ENCODE measurements at regions of chr19 and their contacts with region 1.

Region 1: DNA sequence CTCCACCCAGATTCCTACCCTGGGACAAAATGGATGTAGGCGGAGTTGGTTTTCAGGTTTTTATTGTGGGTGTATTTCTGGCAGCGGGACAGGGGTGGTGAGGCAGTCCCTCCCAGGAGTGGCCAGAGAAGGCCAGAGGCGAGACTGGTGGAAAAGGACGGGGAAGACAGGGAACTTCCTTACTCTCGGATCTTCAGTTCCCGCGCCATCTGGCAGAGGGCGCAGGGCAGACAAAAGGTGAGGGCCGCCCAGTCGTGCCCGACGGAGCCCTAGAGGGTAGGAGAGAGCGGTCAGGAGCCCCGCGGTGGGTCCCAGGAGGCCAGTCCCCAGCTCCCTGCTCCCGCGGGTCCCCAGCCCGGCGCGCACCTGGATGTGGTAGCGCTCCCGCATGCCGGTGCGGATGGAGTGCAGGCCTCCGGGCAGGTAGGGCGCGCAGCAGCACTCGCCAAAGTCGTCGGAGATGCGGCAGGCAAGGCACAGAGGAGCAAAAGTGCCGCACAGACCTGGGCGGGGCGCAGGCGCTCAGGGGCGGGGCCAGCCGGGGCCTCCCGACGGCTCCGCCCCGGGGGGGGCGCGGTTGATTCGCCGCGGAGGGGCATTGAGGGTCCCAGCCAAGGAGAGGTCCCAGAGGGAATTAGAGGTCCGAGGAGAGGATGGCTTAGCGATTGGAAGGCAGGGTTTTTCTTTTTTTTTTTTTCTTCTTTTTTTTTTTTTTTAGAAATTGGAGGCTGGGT is 3.0 kb downstream of the CNFN start:
- DNase-seq: peak; percentile 44 to 74 (median 68)
- ATAC-seq: peak; percentile 94
- H3K4me3 ChIP-seq: peak overlapping the region; percentile 48
- H3K4me3 Mint-ChIP-seq: peak overlapping the region; percentile 28 to 77 (median 60)
- H3K27ac ChIP-seq: no peak overlapping the region
- H3K27ac Mint-ChIP-seq: peak overlapping the region in 1 of 9 donors; percentile 31
- H3K4me1 ChIP-seq: no peaks in the 10 kb centered on the region
- H3K4me1 Mint-ChIP-seq: peaks cover 5 to 8% (median 6%) of the 10 kb centered on the region in 7 donors
- H3K27me3 ChIP-seq: no peaks in the 10 kb centered on the region
- H3K27me3 Mint-ChIP-seq: peaks cover 28 to 48% (median 45%) of the 10 kb centered on the region in 5 donors

Region 2: DNA sequence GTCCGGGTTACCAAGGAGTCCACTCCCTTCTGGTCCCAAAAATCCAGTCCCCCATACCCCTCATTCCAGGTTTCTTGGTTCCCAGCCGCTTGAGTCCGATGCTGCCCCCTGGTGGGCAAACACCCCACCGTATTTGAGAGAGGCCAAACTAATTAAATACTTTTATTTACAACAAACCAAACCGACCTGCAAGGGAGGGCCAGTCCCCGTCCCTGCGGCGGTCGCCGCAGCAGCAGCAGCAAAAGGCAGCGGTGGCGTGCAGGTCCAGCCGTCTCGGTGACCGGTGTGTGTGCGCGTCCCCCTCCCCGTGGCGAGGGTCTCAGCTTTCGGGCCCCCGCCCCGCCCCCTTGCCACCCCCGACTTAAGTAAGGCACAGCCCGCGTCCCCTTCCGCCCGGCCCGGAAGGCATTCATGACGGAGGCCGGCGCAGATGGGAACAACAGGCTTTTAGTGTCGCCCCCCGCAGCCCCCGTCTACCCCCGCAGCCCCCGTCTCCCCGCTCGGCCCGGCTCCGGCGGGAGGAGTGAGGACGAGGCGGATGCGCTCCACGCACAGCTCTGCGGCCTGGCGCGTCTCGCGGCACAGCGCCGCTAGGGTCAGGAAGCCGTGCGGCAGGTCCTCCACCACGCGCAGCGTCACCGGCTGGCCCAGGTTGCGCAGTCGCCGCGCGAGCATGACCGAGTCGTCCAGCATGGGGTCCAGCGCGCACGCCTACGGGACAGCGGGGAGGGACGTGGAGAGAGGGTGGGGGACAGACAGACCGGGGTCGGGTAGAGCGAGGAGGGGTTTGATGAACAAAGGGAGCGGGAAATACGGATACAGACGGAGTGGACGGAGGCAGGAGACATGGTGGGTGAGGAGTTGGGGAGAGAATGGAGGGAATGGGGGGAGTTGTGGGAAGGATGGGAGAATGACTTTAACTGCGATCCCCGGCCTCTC is 14.5 kb after region 1 on chr19:
- CTCF ChIA-PET with region 1: interaction called, 3 read pairs
- POLR2A ChIA-PET with region 1: interaction called, 5 read pairs
- intact Hi-C with region 1: loop called (anchors 1 kb)
- DNase-seq: peak; percentile 46 to 72 (median 64)
- ATAC-seq: peak; percentile 78
- H3K4me3 ChIP-seq: peak overlapping the region; percentile 62
- H3K4me3 Mint-ChIP-seq: peak overlapping the region; percentile 79 to 88 (median 84)
- H3K27ac ChIP-seq: peak overlapping the region; percentile 68
- H3K27ac Mint-ChIP-seq: peak overlapping the region; percentile 49 to 88 (median 81)
- H3K4me1 ChIP-seq: peaks cover 12 to 13% of the 10 kb centered on the region in 2 donors
- H3K4me1 Mint-ChIP-seq: peaks cover 25 to 51% (median 42%) of the 10 kb centered on the region in 7 donors
- H3K27me3 ChIP-seq: no peaks in the 10 kb centered on the region
- H3K27me3 Mint-ChIP-seq: no peaks in the 10 kb centered on the region

Region 3: GRCh38 chr19:42433503-42434260 is 46.5 kb after region 1 on chr19:
- CTCF ChIA-PET with region 1: interaction called, 6 read pairs
- POLR2A ChIA-PET with region 1: no interaction called
- intact Hi-C with region 1: loop called in 1 of 2 experiments (anchors 1 kb)
- DNase-seq: peak in 7 of 9 donors; percentile 41 to 62 (median 56)
- ATAC-seq: peak; percentile 64
- H3K4me3 ChIP-seq: no peak overlapping the region
- H3K4me3 Mint-ChIP-seq: no peak overlapping the region
- H3K27ac ChIP-seq: no peak overlapping the region
- H3K27ac Mint-ChIP-seq: peak overlapping the region in 1 of 9 donors; percentile 5
- H3K4me1 ChIP-seq: no peaks in the 10 kb centered on the region
- H3K4me1 Mint-ChIP-seq: peaks cover 4 to 10% (median 6%) of the 10 kb centered on the region in 7 donors
- H3K27me3 ChIP-seq: no peaks in the 10 kb centered on the region
- H3K27me3 Mint-ChIP-seq: peaks cover 0 to 4% (median 0%) of the 10 kb centered on the region in 5 donors

Region 4: DNA sequence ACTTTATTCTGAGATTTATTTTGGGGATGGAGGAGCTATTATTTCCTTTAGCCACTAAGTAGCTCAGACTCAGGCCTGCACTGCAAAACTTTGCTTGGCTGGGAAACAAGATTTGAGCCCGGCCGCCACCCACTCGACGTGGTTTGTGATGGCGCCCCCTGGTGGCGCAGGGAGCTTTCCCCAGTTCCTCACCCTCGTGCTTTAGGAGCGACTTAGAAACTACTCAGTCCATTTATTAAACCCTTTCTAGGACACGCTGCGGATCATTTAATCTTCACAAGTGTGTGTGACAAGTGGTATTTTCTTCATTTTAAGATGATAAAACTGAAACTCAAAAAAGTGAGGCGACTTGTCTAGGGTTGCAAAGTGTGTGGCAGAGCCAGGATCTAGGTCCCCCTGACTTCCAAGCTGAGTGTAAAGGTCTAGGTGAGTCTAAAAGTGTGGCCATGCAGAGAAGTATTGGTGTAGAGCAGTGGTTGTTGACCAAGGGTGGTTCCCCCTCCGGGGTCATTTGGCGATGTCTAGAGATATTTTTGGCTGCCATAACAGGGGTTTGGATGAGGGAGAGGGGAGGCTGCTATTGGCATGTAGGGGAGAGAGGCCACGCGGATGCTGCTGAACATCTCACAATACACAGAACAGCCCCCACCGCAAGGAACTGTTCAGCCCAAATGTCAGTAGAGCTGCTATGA is 53.4 kb after region 1 on chr19:
- CTCF ChIA-PET with region 1: interaction called, 6 read pairs
- POLR2A ChIA-PET with region 1: no interaction called
- intact Hi-C with region 1: loop called in 1 of 2 experiments (anchors 2 kb)
- DNase-seq: peak; percentile 51 to 84 (median 76)
- ATAC-seq: peak; percentile 75
- H3K4me3 ChIP-seq: no peak overlapping the region
- H3K4me3 Mint-ChIP-seq: peak overlapping the region in 7 of 10 donors; percentile 24 to 69 (median 47)
- H3K27ac ChIP-seq: no peak overlapping the region
- H3K27ac Mint-ChIP-seq: peak overlapping the region in 8 of 9 donors; percentile 2 to 53 (median 25)
- H3K4me1 ChIP-seq: peaks cover 13 to 16% of the 10 kb centered on the region in 2 donors
- H3K4me1 Mint-ChIP-seq: peaks cover 20 to 34% (median 31%) of the 10 kb centered on the region in 7 donors
- H3K27me3 ChIP-seq: no peaks in the 10 kb centered on the region
- H3K27me3 Mint-ChIP-seq: peaks cover 0 to 7% (median 0%) of the 10 kb centered on the region in 5 donors

Measured in naive thymus-derived CD4-positive, alpha-beta T cell (primary cell).